ENCODE measurements at regions of chr1 and their contacts with region 1.

Region 1: GRCh38 chr1:114346480-114347029 is 164.4 kb downstream of the TRIM33 start:
- DNase-seq: peak; percentile 94 to 99 (median 97)
- ATAC-seq: peak; percentile 98
- H3K4me3 ChIP-seq: peak overlapping the region; percentile 43 to 47
- H3K4me3 Mint-ChIP-seq: peak overlapping the region; percentile 92
- H3K27ac ChIP-seq: peak overlapping the region in 1 of 2 experiments; percentile 41
- H3K27ac Mint-ChIP-seq: peak overlapping the region; percentile 94
- H3K4me1 ChIP-seq: peaks cover 30% of the 10 kb centered on the region
- H3K4me1 Mint-ChIP-seq: peaks cover 33% of the 10 kb centered on the region
- H3K27me3 ChIP-seq: no peaks in the 10 kb centered on the region
- H3K27me3 Mint-ChIP-seq: no peaks in the 10 kb centered on the region
- CTCF ChIP-seq: peak; percentile 100

Region 2: GRCh38 chr1:114229368-114229767 is 117.2 kb before region 1 on chr1:
- CTCF ChIA-PET with region 1: no interaction called
- POLR2A ChIA-PET with region 1: no interaction called
- intact Hi-C with region 1: no loop called
- DNase-seq: no peak
- ATAC-seq: no peak
- H3K4me3 ChIP-seq: no peak overlapping the region
- H3K4me3 Mint-ChIP-seq: no peak overlapping the region
- H3K27ac ChIP-seq: no peak overlapping the region
- H3K27ac Mint-ChIP-seq: no peak overlapping the region
- H3K4me1 ChIP-seq: peaks cover 1% of the 10 kb centered on the region
- H3K4me1 Mint-ChIP-seq: peaks cover 5% of the 10 kb centered on the region
- H3K27me3 ChIP-seq: no peaks in the 10 kb centered on the region
- H3K27me3 Mint-ChIP-seq: no peaks in the 10 kb centered on the region
- CTCF ChIP-seq: no peak

Region 3: DNA sequence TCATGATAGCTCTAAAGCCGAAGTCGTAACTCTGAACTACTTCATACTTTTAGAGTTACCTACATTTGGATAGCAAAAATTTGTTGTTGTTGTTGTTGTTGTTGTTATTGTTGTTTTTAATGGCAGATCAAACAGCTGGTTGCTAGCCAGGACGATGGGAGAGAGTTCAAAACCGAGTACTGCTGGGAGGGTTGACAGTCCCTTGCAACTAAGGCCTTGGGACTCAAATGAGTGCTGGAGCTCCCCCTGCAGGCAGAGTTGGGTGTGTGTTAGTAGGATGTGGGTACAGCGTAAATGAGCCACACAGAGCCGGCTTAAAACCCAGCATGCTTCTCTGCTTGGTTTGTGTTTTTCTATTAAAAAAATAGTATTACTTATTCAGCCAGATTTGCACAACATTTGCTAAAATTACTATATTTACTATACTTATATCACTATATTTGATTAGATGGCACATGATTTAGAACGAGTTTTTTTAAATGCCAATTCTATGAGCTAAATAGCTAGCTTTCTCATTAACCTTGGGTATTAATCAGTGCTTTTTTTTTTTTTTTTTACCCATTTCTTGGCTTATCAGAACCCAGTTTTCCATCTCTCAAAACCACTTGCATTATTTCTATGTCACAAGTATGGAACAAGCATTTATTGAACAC is 63.7 kb before region 1 on chr1:
- CTCF ChIA-PET with region 1: interaction called, 72 read pairs
- POLR2A ChIA-PET with region 1: no interaction called
- intact Hi-C with region 1: loop called in 1 of 2 experiments (anchors 2 kb)
- DNase-seq: peak; percentile 67 to 91 (median 84)
- ATAC-seq: peak; percentile 99
- H3K4me3 ChIP-seq: no peak overlapping the region
- H3K4me3 Mint-ChIP-seq: no peak overlapping the region
- H3K27ac ChIP-seq: no peak overlapping the region
- H3K27ac Mint-ChIP-seq: no peak overlapping the region
- H3K4me1 ChIP-seq: no peaks in the 10 kb centered on the region
- H3K4me1 Mint-ChIP-seq: peaks cover 8% of the 10 kb centered on the region
- H3K27me3 ChIP-seq: no peaks in the 10 kb centered on the region
- H3K27me3 Mint-ChIP-seq: no peaks in the 10 kb centered on the region
- CTCF ChIP-seq: peak; percentile 80

Region 4: DNA sequence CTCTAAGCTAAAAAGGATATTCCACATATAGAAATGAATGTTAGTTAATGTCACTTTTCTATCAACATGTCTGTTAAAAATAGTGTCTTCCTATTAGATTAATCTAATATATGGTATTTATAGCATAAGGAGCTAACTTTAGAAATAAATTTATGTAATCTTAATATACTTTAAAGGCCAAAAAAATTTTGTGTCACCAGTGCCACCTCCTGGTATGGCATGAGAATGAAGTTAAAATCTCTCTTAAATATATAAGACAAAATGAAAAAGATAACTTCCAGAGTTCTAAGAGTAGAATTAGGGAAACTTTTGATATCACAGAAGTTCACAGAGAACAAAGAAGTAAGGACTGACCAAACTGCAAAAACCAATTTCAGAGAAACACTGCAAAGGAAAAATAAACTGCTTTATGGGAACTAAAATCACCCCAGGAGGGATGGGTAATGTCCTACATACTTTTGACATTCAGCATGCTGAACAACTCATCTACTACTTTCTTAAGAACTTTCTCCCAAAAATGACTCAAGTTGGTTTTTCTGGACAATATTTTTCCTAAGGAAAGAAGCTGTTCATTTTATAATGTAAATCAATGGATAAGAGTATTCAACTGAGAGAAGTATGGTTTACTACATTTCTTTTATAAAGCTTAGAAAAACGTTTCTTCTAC is 81.7 kb after region 1 on chr1:
- CTCF ChIA-PET with region 1: interaction called, 23 read pairs
- POLR2A ChIA-PET with region 1: no interaction called
- intact Hi-C with region 1: loop called (anchors 1 kb)
- DNase-seq: peak in 3 of 9 experiments; percentile 17 to 54 (median 46)
- ATAC-seq: no peak
- H3K4me3 ChIP-seq: no peak overlapping the region
- H3K4me3 Mint-ChIP-seq: no peak overlapping the region
- H3K27ac ChIP-seq: no peak overlapping the region
- H3K27ac Mint-ChIP-seq: no peak overlapping the region
- H3K4me1 ChIP-seq: no peaks in the 10 kb centered on the region
- H3K4me1 Mint-ChIP-seq: peaks cover 2% of the 10 kb centered on the region
- H3K27me3 ChIP-seq: no peaks in the 10 kb centered on the region
- H3K27me3 Mint-ChIP-seq: no peaks in the 10 kb centered on the region
- CTCF ChIP-seq: peak; percentile 73

Region 5: DNA sequence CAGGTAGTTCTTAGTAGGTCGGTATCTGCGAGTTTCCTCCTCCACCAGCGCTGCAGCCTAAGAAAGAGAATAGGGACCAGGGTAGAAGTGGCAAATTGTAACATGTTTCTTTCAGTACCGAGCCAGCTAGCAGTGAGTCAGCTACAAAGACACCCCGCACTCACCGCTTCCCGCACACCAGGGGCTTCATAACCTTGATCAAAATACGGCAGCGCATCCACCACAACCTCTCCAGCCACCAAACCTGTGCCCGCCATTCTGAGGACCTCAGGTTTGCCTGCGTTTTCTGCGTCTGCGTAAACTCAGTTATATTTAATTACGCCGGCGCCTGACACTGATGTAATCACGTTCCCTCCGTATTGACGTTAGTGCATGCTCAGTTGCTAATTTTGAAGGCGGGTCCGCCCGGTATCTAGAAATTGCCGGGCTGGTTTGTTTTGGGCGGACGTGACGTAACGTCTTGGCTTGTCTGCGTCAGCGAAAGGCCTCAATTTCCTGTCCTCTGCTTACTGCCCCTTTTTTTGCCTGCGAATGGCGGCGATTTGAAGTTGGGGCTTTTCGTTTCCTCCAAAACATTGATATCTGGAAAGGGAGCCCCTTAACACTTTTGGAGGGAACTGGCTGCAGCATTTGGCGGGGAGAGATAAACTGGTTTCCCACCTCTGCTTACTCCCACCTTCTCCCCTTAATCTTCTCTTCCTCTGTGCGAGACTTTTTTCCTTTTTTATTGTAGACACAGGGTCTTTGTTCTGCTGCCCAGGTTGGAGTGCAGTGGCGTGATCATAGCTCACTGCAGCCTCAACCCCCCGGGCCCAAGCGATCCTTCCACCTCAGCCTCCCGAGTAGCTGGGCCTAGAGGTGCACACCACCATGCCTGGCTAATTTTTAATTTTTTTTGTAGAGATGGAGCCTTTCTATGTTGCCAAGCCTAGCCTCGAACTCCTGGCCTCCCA is 235.1 kb after region 1 on chr1 and contains the start of gene BCAS2:
- CTCF ChIA-PET with region 1: no interaction called
- POLR2A ChIA-PET with region 1: no interaction called
- intact Hi-C with region 1: loop called (anchors 1 to 10 kb)
- DNase-seq: peak; percentile 90 to 99 (median 95)
- ATAC-seq: peak; percentile 95
- H3K4me3 ChIP-seq: peak within 1 kb of the TSS; percentile 56 to 72
- H3K4me3 Mint-ChIP-seq: peak within 1 kb of the TSS; percentile 96
- H3K27ac ChIP-seq: peak within 1 kb of the TSS; percentile 84 to 94
- H3K27ac Mint-ChIP-seq: peak within 1 kb of the TSS; percentile 99
- H3K4me1 ChIP-seq: peaks cover 22% of the 10 kb centered on the region
- H3K4me1 Mint-ChIP-seq: peaks cover 46% of the 10 kb centered on the region
- H3K27me3 ChIP-seq: no peaks in the 10 kb centered on the region
- H3K27me3 Mint-ChIP-seq: no peaks in the 10 kb centered on the region
- CTCF ChIP-seq: no peak
- total RNA-seq, gene BCAS2: 113 to 125 TPM

Region 6: DNA sequence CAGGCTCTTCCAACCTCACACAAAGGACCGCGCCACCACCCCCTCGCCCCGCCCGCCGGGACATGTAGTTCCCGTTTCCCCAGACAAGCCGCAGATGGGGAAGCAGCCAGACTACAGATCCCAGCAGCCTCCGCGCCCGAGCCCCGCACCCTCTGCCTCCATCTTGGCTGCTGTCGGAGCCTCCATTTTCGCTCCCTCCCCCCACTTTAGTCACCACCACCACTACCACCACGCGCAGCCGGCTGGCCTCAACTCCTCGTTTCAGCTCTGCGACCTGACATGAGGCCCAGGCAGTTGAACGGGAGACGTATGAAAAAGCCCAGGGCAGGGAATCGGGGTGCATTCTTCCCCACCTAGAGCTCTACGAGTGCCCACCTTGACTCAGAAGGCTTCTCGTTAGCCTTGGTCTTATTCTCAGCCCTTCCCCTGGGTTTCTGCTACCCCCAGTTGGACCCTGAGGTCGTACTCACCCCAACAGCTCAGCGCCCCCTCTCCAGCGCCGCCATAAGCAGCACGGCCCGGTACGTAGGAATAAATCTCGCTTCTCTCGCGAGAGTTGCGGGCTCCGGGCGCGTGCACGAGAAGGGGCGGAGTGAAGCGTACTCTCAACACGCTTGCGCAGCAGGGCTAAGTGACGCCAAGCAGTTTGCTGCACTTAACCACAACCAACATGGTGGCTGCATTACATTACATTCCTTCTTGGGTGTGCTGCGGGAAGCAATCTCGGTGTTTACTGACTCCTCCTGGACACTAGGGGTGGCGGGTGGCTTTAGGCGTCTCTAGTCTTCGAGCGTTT is 411.1 kb after region 1 on chr1 and contains the start of gene CSDE1:
- CTCF ChIA-PET with region 1: no interaction called
- POLR2A ChIA-PET with region 1: no interaction called
- intact Hi-C with region 1: loop called in 1 of 2 experiments (anchors 1 kb)
- DNase-seq: peak; percentile 94 to 99 (median 97)
- ATAC-seq: peak; percentile 79
- H3K4me3 ChIP-seq: peak within 1 kb of the TSS; percentile 95 to 100
- H3K4me3 Mint-ChIP-seq: peak within 1 kb of the TSS; percentile 100
- H3K27ac ChIP-seq: peak within 1 kb of the TSS; percentile 97 to 100
- H3K27ac Mint-ChIP-seq: peak within 1 kb of the TSS; percentile 100
- H3K4me1 ChIP-seq: peaks cover 44% of the 10 kb centered on the region
- H3K4me1 Mint-ChIP-seq: peaks cover 51% of the 10 kb centered on the region
- H3K27me3 ChIP-seq: no peaks in the 10 kb centered on the region
- H3K27me3 Mint-ChIP-seq: no peaks in the 10 kb centered on the region
- CTCF ChIP-seq: no peak
- total RNA-seq, gene CSDE1: 732 to 774 TPM

Region 7: DNA sequence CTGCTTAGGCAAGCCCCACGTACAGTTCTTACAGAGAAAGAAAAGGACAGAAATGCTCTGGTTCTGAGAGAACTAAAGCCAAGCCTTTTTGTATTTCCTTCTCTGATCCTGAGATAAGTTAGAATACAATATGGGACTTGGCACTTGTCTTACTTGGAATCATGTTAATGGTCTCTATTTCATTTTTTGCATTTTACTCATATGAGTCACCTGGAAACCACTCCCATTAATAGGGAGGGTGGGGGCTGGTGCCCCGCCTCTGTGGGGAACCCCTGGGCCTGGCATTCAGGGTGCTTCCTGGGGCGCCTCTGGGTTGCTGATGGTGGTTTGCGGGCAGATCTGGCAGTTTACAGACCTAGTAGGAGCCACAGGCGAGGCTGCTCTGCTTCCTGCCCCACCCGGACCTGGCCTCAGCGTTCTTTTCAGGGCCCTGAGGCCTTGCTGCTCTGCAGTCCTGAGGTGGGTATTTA is 716.0 kb after region 1 on chr1:
- CTCF ChIA-PET with region 1: no interaction called
- POLR2A ChIA-PET with region 1: no interaction called
- intact Hi-C with region 1: loop called in 1 of 2 experiments (anchors 10 kb)
- DNase-seq: peak; percentile 91 to 99 (median 94)
- ATAC-seq: peak; percentile 89
- H3K4me3 ChIP-seq: peak overlapping the region in 1 of 2 experiments; percentile 17
- H3K4me3 Mint-ChIP-seq: peak overlapping the region; percentile 79
- H3K27ac ChIP-seq: peak overlapping the region; percentile 74 to 93
- H3K27ac Mint-ChIP-seq: peak overlapping the region; percentile 100
- H3K4me1 ChIP-seq: peaks cover 35% of the 10 kb centered on the region
- H3K4me1 Mint-ChIP-seq: peaks cover 43% of the 10 kb centered on the region
- H3K27me3 ChIP-seq: no peaks in the 10 kb centered on the region
- H3K27me3 Mint-ChIP-seq: no peaks in the 10 kb centered on the region
- CTCF ChIP-seq: no peak

Measured in CD8-positive, alpha-beta T cell (primary cell).